ENCODE measurements at regions of chr2 and their contacts with region 1.

Region 1: DNA sequence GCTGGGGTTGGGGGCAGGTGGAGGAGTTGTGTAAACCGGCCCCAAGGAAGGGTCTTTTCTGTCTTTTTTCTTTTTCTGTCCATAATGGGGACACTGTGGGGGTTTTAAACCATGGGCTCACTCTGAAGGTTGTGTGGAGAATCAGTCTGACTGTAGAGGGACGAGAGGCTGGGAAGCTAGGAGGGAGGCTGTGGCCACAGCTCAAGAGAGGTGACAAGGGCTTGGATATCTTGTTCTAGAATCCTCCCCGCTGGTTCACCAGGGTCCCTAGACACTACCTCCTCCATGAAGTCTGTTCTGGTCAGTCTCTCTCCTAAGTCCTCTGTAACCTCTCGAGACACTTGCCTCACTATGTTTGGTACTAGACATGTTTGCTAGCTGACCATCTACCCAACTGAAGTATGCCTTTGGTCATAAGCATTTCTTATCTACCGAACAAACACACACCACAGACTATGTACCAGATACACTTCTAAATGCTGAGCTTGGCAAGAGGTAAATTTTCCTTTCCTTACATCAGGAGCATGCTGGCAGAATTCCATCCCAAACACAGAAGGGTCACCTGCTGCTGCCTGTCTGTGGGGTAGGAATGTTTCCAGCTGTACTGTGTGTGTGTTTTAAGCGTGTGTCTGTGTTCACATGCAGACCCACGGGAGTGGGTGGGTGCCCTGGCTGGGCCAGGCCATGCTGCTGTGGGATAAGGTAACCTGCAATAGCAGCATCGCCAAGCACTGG is 69.6 kb upstream of the MGAT4A start:
- DNase-seq: no peak
- H3K4me3 ChIP-seq: no peak overlapping the region
- H3K27ac ChIP-seq: no peak overlapping the region
- H3K4me1 ChIP-seq: no peaks in the 10 kb centered on the region; a peak in 1 of 7 replicates
- H3K27me3 ChIP-seq: no peaks in the 10 kb centered on the region
- CTCF ChIP-seq: no peak
- EP300 ChIP-seq: no peak
- POLR2A ChIP-seq: no peak
- RAD21 ChIP-seq: no peak

Region 2: DNA sequence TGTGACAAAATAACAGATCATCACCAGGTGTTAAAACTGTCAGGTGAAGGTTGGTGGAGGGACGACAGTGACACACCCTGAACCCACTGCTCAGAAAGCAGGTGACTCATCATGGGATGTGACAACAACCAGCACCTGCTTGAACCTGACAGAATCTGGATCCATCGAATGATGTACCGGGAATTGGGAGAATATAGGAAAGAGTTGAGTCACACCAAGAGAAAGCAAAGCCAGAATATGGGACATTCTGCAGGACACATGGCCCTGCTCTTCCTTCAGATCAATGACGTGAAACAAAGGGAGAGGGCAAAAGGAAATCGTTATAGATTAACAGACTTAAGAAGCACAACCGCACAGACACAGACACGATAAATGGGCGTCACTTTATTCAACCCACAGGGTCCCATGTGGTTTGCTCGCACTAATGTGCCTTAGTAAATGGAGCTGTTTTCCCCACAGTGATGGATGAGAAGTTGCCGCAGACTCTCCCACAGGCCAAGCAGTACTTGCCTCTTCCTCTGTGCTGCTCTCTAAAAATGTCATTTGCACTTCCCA is 35.4 kb after region 1 on chr2:
- CTCF ChIA-PET with region 1: interaction called, 11 read pairs
- POLR2A ChIA-PET with region 1: no interaction called
- DNase-seq: no peak
- H3K4me3 ChIP-seq: no peak overlapping the region
- H3K27ac ChIP-seq: no peak overlapping the region
- H3K4me1 ChIP-seq: peaks cover 0 to 2% (median 0%) of the 10 kb centered on the region in 4 experiments; a peak in 1 of 7 replicates
- H3K27me3 ChIP-seq: no peaks in the 10 kb centered on the region; a peak in 1 of 7 replicates
- CTCF ChIP-seq: no peak
- EP300 ChIP-seq: no peak
- POLR2A ChIP-seq: no peak
- RAD21 ChIP-seq: no peak

Region 3: DNA sequence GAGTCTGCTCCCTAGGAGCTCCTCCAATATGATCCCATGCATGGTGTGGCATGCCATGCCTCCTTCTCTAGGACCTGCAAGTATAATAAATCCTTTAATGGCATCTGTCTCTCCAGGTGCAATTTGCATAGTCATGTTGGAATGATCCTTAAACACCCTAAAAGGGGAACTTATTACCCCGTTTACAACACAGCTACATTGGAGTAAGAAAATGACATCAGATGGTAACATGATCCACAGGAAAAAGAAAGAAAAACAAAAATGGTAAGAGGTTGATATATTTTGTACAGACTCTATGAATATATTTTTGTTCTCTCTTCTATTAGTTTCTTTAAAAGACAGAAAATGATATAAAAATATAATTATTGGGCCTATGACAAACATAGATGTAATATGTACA is 56.5 kb after region 1 on chr2:
- CTCF ChIA-PET with region 1: no interaction called
- POLR2A ChIA-PET with region 1: no interaction called
- DNase-seq: no peak
- H3K4me3 ChIP-seq: no peak overlapping the region
- H3K27ac ChIP-seq: no peak overlapping the region
- H3K4me1 ChIP-seq: no peaks in the 10 kb centered on the region
- H3K27me3 ChIP-seq: no peaks in the 10 kb centered on the region
- CTCF ChIP-seq: no peak
- EP300 ChIP-seq: no peak
- POLR2A ChIP-seq: no peak
- RAD21 ChIP-seq: no peak

Measured in H1 (cell line).